ENCODE measurements at regions of chr3 and their contacts with region 1.

Region 1: GRCh38 chr3:72549761-72550581 is 298.3 kb downstream of the SHQ1 start:
- DNase-seq: peak in 4 of 9 experiments; percentile 5 to 54 (median 18)
- ATAC-seq: no peak
- H3K4me3 ChIP-seq: peak overlapping the region; percentile 19 to 53
- H3K4me3 Mint-ChIP-seq: peak overlapping the region; percentile 69
- H3K27ac ChIP-seq: peak overlapping the region in 1 of 2 experiments; percentile 5
- H3K27ac Mint-ChIP-seq: peak overlapping the region; percentile 62
- H3K4me1 ChIP-seq: peaks cover 13% of the 10 kb centered on the region
- H3K4me1 Mint-ChIP-seq: peaks cover 19% of the 10 kb centered on the region
- H3K27me3 ChIP-seq: no peaks in the 10 kb centered on the region
- H3K27me3 Mint-ChIP-seq: no peaks in the 10 kb centered on the region
- CTCF ChIP-seq: no peak

Region 2: GRCh38 chr3:72152551-72153476 is 397.2 kb before region 1 on chr3:
- CTCF ChIA-PET with region 1: no interaction called
- POLR2A ChIA-PET with region 1: no interaction called
- intact Hi-C with region 1: loop called in 1 of 2 experiments (anchors 10 kb)
- DNase-seq: no peak
- ATAC-seq: no peak
- H3K4me3 ChIP-seq: no peak overlapping the region
- H3K4me3 Mint-ChIP-seq: no peak overlapping the region
- H3K27ac ChIP-seq: no peak overlapping the region
- H3K27ac Mint-ChIP-seq: no peak overlapping the region
- H3K4me1 ChIP-seq: no peaks in the 10 kb centered on the region
- H3K4me1 Mint-ChIP-seq: no peaks in the 10 kb centered on the region
- H3K27me3 ChIP-seq: no peaks in the 10 kb centered on the region
- H3K27me3 Mint-ChIP-seq: no peaks in the 10 kb centered on the region
- CTCF ChIP-seq: no peak

Measured in CD8-positive, alpha-beta T cell (primary cell).